ENCODE measurements at regions of chr6 and their contacts with region 1.

Region 1: DNA sequence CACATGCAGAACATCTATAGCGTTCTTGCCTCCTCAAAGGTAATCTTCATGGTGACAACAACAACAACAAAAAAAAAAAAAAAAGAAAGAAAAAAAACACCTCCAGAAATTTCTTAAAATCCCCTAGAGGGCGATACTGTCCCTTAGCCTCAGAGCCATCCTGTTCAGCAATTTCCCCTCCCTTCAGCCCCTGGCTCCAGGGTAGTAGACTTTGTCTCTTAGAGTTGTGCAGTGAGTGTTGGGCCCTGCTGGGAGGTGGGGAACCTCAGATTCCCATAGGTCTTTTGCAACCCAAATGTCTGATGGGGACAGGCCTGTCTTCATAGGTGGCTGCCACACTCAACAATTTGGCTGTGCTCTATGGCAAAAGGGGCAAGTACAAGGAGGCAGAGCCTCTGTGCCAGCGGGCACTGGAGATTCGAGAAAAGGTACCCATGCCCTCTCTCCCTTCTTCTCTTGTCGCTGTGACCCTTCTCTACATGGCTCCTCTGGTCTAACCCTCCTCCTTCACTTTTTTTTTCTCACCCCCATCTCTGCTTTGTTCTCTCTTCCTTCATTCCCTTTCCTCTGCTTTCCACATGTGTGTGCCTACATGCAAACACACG is 6.0 kb upstream of the PTK7 start:
- DNase-seq: peak; percentile 73
- H3K4me3 ChIP-seq: no peak overlapping the region
- H3K27ac ChIP-seq: no peak overlapping the region
- H3K4me1 ChIP-seq: peaks cover 9% of the 10 kb centered on the region
- CTCF ChIP-seq: peak; percentile 85

Region 2: GRCh38 chr6:43082806-43083655 is 12.9 kb after region 1 on chr6:
- CTCF ChIA-PET with region 1: no interaction called
- POLR2A ChIA-PET with region 1: no interaction called
- intact Hi-C with region 1: no loop called
- DNase-seq: no peak
- H3K4me3 ChIP-seq: no peak overlapping the region
- H3K27ac ChIP-seq: no peak overlapping the region
- H3K4me1 ChIP-seq: peaks cover under 1% of the 10 kb centered on the region
- CTCF ChIP-seq: no peak

Region 3: DNA sequence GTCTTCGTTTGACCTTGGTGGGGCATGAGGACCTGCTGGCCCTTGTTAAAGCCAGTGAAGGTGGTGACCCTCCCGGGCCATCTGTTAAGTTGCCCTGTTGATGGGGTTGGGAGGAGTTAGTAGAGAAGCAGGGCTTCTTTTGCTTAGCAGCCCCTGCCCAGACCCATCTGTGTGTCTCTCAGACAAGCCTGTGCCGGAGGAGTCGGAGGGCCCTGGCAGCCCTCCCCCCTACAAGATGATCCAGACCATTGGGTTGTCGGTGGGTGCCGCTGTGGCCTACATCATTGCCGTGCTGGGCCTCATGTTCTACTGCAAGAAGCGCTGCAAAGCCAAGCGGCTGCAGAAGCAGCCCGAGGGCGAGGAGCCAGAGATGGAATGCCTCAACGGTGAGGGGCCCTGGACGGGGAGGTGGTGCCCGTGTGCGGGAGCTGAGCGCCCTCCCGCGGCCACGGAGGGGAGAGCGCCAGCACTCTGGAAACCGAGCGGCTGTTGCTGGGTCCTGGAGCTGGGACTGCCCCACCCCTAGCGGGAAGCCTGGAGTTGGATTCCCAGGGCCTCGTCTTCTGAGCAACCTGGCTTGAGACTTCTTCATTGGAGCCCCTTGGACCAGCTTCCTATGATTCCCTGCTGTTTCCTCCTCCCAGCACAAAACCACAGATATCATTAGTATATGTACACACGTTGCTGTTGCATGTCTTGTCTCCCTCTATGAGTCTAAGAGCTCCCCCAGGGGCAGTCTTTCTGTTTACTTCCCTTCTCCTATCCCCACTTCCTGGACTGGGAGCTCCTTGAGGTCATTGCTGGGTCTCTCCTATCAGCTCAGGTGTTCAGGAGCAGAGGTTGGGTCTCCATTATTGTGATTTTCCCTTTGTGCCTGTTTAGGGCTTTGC is 73.3 kb after region 1 on chr6:
- CTCF ChIA-PET with region 1: no interaction called
- POLR2A ChIA-PET with region 1: no interaction called
- intact Hi-C with region 1: loop called (anchors 1 kb)
- DNase-seq: peak; percentile 81
- H3K4me3 ChIP-seq: no peak overlapping the region
- H3K27ac ChIP-seq: no peak overlapping the region
- H3K4me1 ChIP-seq: peaks cover 19% of the 10 kb centered on the region
- CTCF ChIP-seq: peak; percentile 96